ENCODE measurements at regions of chr7 and their contacts with region 1.

Region 1: GRCh38 chr7:5363729-5364128 is 59.9 kb downstream of the TNRC18 start:
- DNase-seq: no peak
- H3K4me3 ChIP-seq: no peak overlapping the region
- H3K27ac ChIP-seq: no peak overlapping the region
- H3K4me1 ChIP-seq: no peaks in the 10 kb centered on the region; a peak in 4 of 7 replicates
- H3K27me3 ChIP-seq: no peaks in the 10 kb centered on the region
- CTCF ChIP-seq: no peak
- EP300 ChIP-seq: no peak
- POLR2A ChIP-seq: no peak
- RAD21 ChIP-seq: no peak

Region 2: DNA sequence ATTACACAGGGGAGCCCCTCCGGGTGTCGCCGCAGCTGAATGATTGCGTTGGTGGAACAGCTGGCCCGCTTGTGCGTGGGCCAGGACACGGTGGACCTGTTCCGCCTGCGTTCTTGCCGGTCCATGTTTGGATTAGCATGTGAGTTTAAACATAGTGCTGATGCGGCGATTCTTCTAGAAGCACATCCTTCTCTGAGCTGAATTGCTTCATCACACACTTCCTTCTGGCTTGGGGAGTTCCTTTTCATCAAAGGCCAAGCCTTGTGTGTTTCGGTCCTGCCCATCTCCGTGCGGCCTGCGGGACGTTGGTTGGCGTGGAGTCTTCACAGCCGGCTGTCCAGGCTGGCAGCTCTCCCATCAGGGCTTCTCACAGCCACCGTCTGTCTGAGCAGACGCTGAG is 126.4 kb before region 1 on chr7:
- CTCF ChIA-PET with region 1: interaction called, 12 read pairs
- POLR2A ChIA-PET with region 1: no interaction called
- DNase-seq: no peak
- H3K4me3 ChIP-seq: no peak overlapping the region
- H3K27ac ChIP-seq: no peak overlapping the region
- H3K4me1 ChIP-seq: peaks cover 0 to 4% (median 1%) of the 10 kb centered on the region in 4 experiments; a peak in 2 of 7 replicates
- H3K27me3 ChIP-seq: peaks cover 0 to 9% (median 0%) of the 10 kb centered on the region in 4 experiments; a peak in 3 of 7 replicates
- CTCF ChIP-seq: no peak
- EP300 ChIP-seq: no peak
- POLR2A ChIP-seq: no peak
- RAD21 ChIP-seq: no peak

Region 3: DNA sequence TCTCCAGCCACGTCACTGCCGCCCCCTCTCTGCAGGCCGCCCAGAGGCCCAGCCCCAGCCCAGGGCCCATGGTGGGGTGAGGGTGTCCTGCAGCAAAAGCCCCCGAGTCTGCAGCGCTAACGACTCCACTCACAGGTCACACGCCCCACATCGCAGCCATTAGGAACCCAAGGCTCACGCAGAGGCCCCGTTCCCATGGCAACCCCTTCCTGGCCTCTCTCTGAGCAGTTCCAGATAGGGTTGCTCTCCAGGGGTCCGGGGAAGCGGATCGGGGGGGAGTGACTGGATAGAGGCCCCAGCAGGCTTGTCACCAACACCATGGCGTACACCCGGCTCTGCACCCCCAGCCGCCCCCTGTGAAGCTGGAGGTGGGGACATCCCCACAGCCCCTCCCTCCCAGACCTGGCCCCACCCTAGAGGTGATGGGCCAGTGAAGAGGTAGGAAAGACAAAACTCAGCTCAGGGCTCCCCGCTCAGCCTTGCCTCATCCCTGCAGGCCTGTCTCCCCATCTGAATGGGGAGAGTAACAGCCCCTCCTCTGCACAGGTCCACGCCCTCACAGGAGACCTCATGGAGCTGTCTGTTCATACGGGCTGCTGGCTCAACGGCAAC is 18.7 kb after region 1 on chr7:
- CTCF ChIA-PET with region 1: interaction called, 36 read pairs
- POLR2A ChIA-PET with region 1: interaction called, 3 read pairs
- DNase-seq: peak in 1 of 2 experiments; percentile 80
- H3K4me3 ChIP-seq: no peak overlapping the region
- H3K27ac ChIP-seq: no peak overlapping the region
- H3K4me1 ChIP-seq: peaks cover 0 to 10% (median 7%) of the 10 kb centered on the region in 4 experiments; a peak in 6 of 7 replicates
- H3K27me3 ChIP-seq: no peaks in the 10 kb centered on the region
- CTCF ChIP-seq: no peak
- EP300 ChIP-seq: no peak
- POLR2A ChIP-seq: no peak
- RAD21 ChIP-seq: no peak

Region 4: GRCh38 chr7:5423844-5424688 is 60.3 kb after region 1 on chr7:
- CTCF ChIA-PET with region 1: interaction called, 10 read pairs
- POLR2A ChIA-PET with region 1: interaction called, 4 read pairs
- DNase-seq: peak; percentile 82 to 90
- H3K4me3 ChIP-seq: peak overlapping the region; percentile 57 to 78 (median 68)
- H3K27ac ChIP-seq: no peak overlapping the region
- H3K4me1 ChIP-seq: peaks cover 0 to 47% (median 17%) of the 10 kb centered on the region in 4 experiments; a peak in 5 of 7 replicates
- H3K27me3 ChIP-seq: peaks cover 33 to 77% (median 66%) of the 10 kb centered on the region in 4 experiments; a peak in 6 of 7 replicates
- CTCF ChIP-seq: no peak
- EP300 ChIP-seq: peak in 1 of 2 experiments; percentile 50; a peak in 1 of 3 replicates
- POLR2A ChIP-seq: no peak; a peak in 1 of 3 replicates
- RAD21 ChIP-seq: no peak

Region 5: GRCh38 chr7:5457245-5457735 is 93.6 kb after region 1 on chr7:
- CTCF ChIA-PET with region 1: interaction called, 68 read pairs
- POLR2A ChIA-PET with region 1: no interaction called
- DNase-seq: no peak
- H3K4me3 ChIP-seq: no peak overlapping the region
- H3K27ac ChIP-seq: no peak overlapping the region
- H3K4me1 ChIP-seq: peaks cover 0 to 3% (median 0%) of the 10 kb centered on the region in 4 experiments; a peak in 1 of 7 replicates
- H3K27me3 ChIP-seq: no peaks in the 10 kb centered on the region
- CTCF ChIP-seq: no peak
- EP300 ChIP-seq: no peak
- POLR2A ChIP-seq: no peak
- RAD21 ChIP-seq: no peak

Region 6: DNA sequence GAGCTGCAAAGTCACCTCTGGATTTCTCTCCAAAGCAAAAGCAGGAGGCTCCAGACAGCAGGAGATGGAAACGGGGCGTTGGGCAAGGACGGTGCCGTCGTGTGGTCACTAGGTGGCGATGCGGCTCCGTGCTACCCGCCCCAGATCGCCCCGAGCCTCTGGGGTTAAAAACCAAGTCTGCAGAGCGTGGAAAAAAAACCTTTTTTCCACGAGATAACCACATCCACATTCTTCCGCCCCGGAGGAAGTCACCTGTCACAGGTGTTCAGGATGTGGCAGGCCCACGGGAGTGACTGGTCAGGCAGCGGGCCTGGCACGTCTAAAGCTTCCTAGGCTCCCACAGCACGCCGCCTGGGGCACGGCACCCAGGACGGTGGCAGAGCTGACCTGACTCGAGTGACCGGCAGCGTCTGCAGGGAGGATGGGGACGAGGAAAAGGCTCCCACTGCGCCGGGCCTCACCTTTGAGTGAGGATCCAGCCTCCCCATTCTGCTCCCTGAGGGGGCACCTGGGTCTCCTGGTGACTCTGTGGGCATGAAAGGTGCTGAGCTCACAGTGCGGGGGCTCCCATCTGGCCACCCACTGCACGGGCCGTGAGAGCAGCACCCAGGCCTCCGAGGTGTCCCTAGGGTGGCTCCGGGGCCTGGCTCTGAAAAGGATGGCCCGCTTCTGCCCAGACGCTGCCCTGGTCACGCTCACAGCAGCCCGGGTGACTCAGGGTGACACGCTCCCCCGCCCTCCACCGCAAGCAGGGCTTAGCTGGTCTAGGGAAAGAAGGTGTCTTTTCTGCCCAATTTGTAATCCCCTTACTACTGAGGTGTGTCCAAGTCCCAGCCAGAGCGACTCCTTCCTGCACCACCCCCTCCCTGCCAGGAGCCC is 131.2 kb after region 1 on chr7:
- CTCF ChIA-PET with region 1: interaction called, 13 read pairs
- POLR2A ChIA-PET with region 1: no interaction called
- DNase-seq: peak in 1 of 2 experiments; percentile 88
- H3K4me3 ChIP-seq: no peak overlapping the region
- H3K27ac ChIP-seq: no peak overlapping the region
- H3K4me1 ChIP-seq: peaks cover 0 to 20% (median 12%) of the 10 kb centered on the region in 4 experiments; a peak in 5 of 7 replicates
- H3K27me3 ChIP-seq: no peaks in the 10 kb centered on the region
- CTCF ChIP-seq: peak in 2 of 3 experiments; percentile 87 to 93; a peak in 3 of 4 replicates
- EP300 ChIP-seq: no peak
- POLR2A ChIP-seq: no peak
- RAD21 ChIP-seq: peak; percentile 94 to 95